ENCODE measurements at regions of chr6 and their contacts with region 1.

Region 1: GRCh38 chr6:145814501-145815308 is at the start of gene FBXO30:
- DNase-seq: peak; percentile 83
- H3K4me3 ChIP-seq: peak within 1 kb of the TSS; percentile 83 to 92 (median 89)
- H3K27ac ChIP-seq: peak within 1 kb of the TSS; percentile 80
- H3K4me1 ChIP-seq: peaks cover 17% of the 10 kb centered on the region
- H3K27me3 ChIP-seq: no peaks in the 10 kb centered on the region
- CTCF ChIP-seq: no peak
- total RNA-seq, gene FBXO30: 10.9 to 14.2 TPM

Region 2: GRCh38 chr6:145728444-145729385 is 86.0 kb before region 1 on chr6:
- CTCF ChIA-PET with region 1: no interaction called
- dilution Hi-C with region 1: no loop called
- in situ Hi-C with region 1: no loop called
- intact Hi-C with region 1: no loop called
- DNase-seq: no peak
- H3K4me3 ChIP-seq: no peak overlapping the region
- H3K27ac ChIP-seq: no peak overlapping the region
- H3K4me1 ChIP-seq: peaks cover 2% of the 10 kb centered on the region
- H3K27me3 ChIP-seq: no peaks in the 10 kb centered on the region
- CTCF ChIP-seq: no peak

Region 3: GRCh38 chr6:145749632-145750031 is 65.1 kb before region 1 on chr6:
- CTCF ChIA-PET with region 1: no interaction called
- dilution Hi-C with region 1: loop called (anchors 5 kb)
- in situ Hi-C with region 1: loop called in 1 of 2 experiments (anchors 10 kb)
- intact Hi-C with region 1: no loop called
- DNase-seq: peak; percentile 64
- H3K4me3 ChIP-seq: no peak overlapping the region
- H3K27ac ChIP-seq: no peak overlapping the region
- H3K4me1 ChIP-seq: peaks cover 4% of the 10 kb centered on the region
- H3K27me3 ChIP-seq: no peaks in the 10 kb centered on the region
- CTCF ChIP-seq: no peak

Region 4: GRCh38 chr6:145887969-145888368 is 73.3 kb after region 1 on chr6:
- CTCF ChIA-PET with region 1: no interaction called
- dilution Hi-C with region 1: no loop called
- in situ Hi-C with region 1: no loop called
- intact Hi-C with region 1: loop called (anchors 5 kb)
- DNase-seq: no peak
- H3K4me3 ChIP-seq: no peak overlapping the region
- H3K27ac ChIP-seq: no peak overlapping the region
- H3K4me1 ChIP-seq: no peaks in the 10 kb centered on the region
- H3K27me3 ChIP-seq: no peaks in the 10 kb centered on the region
- CTCF ChIP-seq: peak; percentile 42 to 54